ENCODE measurements at regions of chr11 and their contacts with region 1.

Region 1: GRCh38 chr11:128342511-128343134 is 244.7 kb downstream of the ETS1 start:
- DNase-seq: peak; percentile 93
- H3K4me3 Mint-ChIP-seq: peak overlapping the region; percentile 66
- H3K27ac Mint-ChIP-seq: peak overlapping the region; percentile 88
- H3K4me1 Mint-ChIP-seq: peaks cover 88% of the 10 kb centered on the region
- H3K27me3 Mint-ChIP-seq: no peaks in the 10 kb centered on the region

Region 2: GRCh38 chr11:128039140-128040021 is 303.2 kb before region 1 on chr11:
- CTCF ChIA-PET with region 1: no interaction called
- POLR2A ChIA-PET with region 1: no interaction called
- intact Hi-C with region 1: loop called (anchors 1 kb)
- DNase-seq: peak; percentile 90
- H3K4me3 Mint-ChIP-seq: peak overlapping the region; percentile 61
- H3K27ac Mint-ChIP-seq: peak overlapping the region; percentile 89
- H3K4me1 Mint-ChIP-seq: peaks cover 52% of the 10 kb centered on the region
- H3K27me3 Mint-ChIP-seq: no peaks in the 10 kb centered on the region

Region 3: GRCh38 chr11:128323381-128323780 is 19.2 kb before region 1 on chr11:
- CTCF ChIA-PET with region 1: interaction called, 49 read pairs
- POLR2A ChIA-PET with region 1: interaction called, 93 read pairs
- intact Hi-C with region 1: loop called (anchors 1 kb)
- DNase-seq: peak; percentile 65
- H3K4me3 Mint-ChIP-seq: peak overlapping the region; percentile 36
- H3K27ac Mint-ChIP-seq: peak overlapping the region; percentile 94
- H3K4me1 Mint-ChIP-seq: peaks cover 88% of the 10 kb centered on the region
- H3K27me3 Mint-ChIP-seq: no peaks in the 10 kb centered on the region

Region 4: GRCh38 chr11:128379587-128380580 is 37.3 kb after region 1 on chr11:
- CTCF ChIA-PET with region 1: no interaction called
- POLR2A ChIA-PET with region 1: no interaction called
- intact Hi-C with region 1: loop called (anchors 1 kb)
- DNase-seq: peak; percentile 57
- H3K4me3 Mint-ChIP-seq: peak overlapping the region; percentile 11
- H3K27ac Mint-ChIP-seq: peak overlapping the region; percentile 56
- H3K4me1 Mint-ChIP-seq: peaks cover 41% of the 10 kb centered on the region
- H3K27me3 Mint-ChIP-seq: no peaks in the 10 kb centered on the region

Region 5: GRCh38 chr11:128412847-128413791 is 70.5 kb after region 1 on chr11:
- CTCF ChIA-PET with region 1: no interaction called
- POLR2A ChIA-PET with region 1: no interaction called
- intact Hi-C with region 1: no loop called
- DNase-seq: no peak
- H3K4me3 Mint-ChIP-seq: no peak overlapping the region
- H3K27ac Mint-ChIP-seq: peak overlapping the region; percentile 14
- H3K4me1 Mint-ChIP-seq: peaks cover 40% of the 10 kb centered on the region
- H3K27me3 Mint-ChIP-seq: no peaks in the 10 kb centered on the region

Region 6: DNA sequence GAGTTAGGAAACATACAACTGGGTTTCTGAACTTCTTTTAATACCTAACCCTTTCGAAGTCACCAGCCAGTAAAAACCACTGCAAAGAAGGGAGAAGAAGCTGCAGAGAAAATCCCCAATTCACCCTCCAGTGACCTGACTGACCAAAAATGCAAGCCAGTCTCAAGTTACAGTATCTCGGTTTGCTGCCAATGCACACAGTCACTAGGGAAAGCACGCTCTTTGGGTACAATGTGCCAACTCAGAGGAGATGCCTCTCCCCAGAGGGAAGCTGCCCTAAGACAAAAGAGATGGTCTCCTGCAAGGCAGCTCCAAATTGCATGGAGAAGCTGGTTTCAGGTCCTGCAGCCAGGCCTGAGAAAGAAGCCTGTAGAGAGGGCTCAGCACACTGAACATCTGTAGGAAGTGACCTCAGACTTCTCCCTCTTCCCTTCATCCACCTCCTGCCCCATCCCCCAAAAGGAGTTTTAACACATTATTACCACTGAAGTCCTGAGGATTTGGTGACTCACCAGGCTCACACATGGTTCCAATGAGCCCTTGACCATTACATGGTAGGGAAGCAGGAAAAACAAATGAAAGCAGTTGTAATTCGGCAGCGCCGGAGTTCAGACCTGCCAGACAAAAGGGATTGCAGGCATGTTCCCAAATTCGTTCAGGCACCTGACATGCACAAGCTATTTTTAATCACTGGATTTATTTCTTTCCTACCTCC is 154.6 kb after region 1 on chr11:
- CTCF ChIA-PET with region 1: interaction called, 3 read pairs
- POLR2A ChIA-PET with region 1: interaction called, 5 read pairs
- intact Hi-C with region 1: loop called (anchors 5 kb)
- DNase-seq: peak; percentile 67
- H3K4me3 Mint-ChIP-seq: peak overlapping the region; percentile 71
- H3K27ac Mint-ChIP-seq: peak overlapping the region; percentile 91
- H3K4me1 Mint-ChIP-seq: peaks cover 95% of the 10 kb centered on the region
- H3K27me3 Mint-ChIP-seq: no peaks in the 10 kb centered on the region

Region 7: GRCh38 chr11:130002846-130003716 is 1660.5 kb after region 1 on chr11:
- CTCF ChIA-PET with region 1: no interaction called
- POLR2A ChIA-PET with region 1: no interaction called
- intact Hi-C with region 1: loop called (anchors 10 kb)
- DNase-seq: peak; percentile 91
- H3K4me3 Mint-ChIP-seq: peak overlapping the region; percentile 94
- H3K27ac Mint-ChIP-seq: peak overlapping the region; percentile 100
- H3K4me1 Mint-ChIP-seq: peaks cover 32% of the 10 kb centered on the region
- H3K27me3 Mint-ChIP-seq: no peaks in the 10 kb centered on the region

Measured in activated CD4-positive, alpha-beta memory T cell treated with anti-CD3 and anti-CD28 coated beads for 36 hours (primary cell).